Head of caudate nucleus (tissue), 42 donors: ENCODE measurements at regions of chr11 and their contacts with region 1.

Region 1: DNA sequence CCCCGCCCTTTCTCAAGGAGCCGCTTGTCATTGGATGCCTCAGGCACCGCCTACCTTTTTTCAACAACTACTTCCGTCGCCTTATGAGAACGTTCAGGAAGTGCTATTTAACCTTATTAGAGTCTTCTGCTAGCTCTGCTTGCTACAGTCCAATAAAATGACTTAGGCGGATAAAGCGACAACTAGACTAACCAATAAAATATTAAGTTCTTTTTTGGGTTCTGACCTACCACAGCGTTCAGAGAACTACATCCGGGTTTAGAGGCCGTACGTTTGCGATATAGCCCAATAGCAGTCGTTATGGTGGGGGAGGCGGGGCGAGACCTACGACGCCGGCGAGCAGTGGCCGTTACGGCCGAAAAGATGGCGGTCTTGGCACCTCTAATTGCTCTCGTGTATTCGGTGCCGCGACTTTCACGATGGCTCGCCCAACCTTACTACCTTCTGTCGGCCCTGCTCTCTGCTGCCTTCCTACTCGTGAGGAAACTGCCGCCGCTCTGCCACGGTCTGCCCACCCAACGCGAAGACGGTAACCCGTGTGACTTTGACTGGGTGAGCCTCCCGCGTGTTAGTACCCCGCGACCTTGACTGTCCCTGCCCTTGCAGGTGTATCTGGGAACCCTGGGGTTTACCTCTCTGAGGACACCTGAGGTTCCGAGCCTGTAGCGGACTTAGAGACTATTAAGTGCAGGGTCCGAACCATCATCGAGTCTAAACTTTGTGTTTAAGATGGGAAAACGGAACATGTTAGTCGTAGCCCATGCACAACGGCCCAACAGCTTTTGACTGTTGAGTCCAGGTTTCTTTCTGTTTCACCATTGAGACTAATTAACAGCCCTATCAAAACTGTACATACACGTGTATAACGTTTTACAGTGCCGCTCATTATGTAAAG is at the start of gene TMX2:
- DNase-seq: peak; percentile 88 to 98 (median 95)

Region 2: GRCh38 chr11:57463671-57464538 is 248.6 kb before region 1 on chr11:
- intact Hi-C with region 1: no loop called
- DNase-seq: no peak

Region 3: GRCh38 chr11:57667736-57668435 is 44.6 kb before region 1 on chr11 and contains the start of gene ZDHHC5:
- intact Hi-C with region 1: loop called (anchors 5 kb)
- DNase-seq: peak; percentile 98 to 100 (median 99)